Heart left ventricle (tissue), 16 donors: ENCODE measurements at regions of chr22 and their contacts with region 1.

Region 1: GRCh38 chr22:32411829-32412592 is at the start of gene RTCB:
- DNase-seq: peak; percentile 94 to 96 (median 96)
- ATAC-seq: peak; percentile 90 to 94 (median 92)
- H3K4me3 ChIP-seq: peak within 1 kb of the TSS; percentile 68 to 99 (median 85)
- H3K27ac ChIP-seq: peak within 1 kb of the TSS in 11 of 12 donors; percentile 20 to 79 (median 68)
- H3K4me1 ChIP-seq: peaks cover 0 to 48% (median 17%) of the 10 kb centered on the region in 12 donors
- H3K27me3 ChIP-seq: no peaks in the 10 kb centered on the region
- CTCF ChIP-seq: peak in 2 of 12 donors; percentile 2 to 7
- POLR2A ChIP-seq: peak in 1 of 2 donors; percentile 53
- total RNA-seq, gene RTCB: 39.4 to 54.0 (median 47.1) TPM

Region 2: GRCh38 chr22:32354360-32355351 is 57.4 kb before region 1 on chr22:
- intact Hi-C with region 1: no loop called
- DNase-seq: peak in 1 of 5 donors; percentile 54
- ATAC-seq: peak in 1 of 4 donors; percentile 69
- H3K4me3 ChIP-seq: peak overlapping the region in 7 of 12 donors; percentile 21 to 59 (median 48)
- H3K27ac ChIP-seq: peak overlapping the region in 4 of 12 donors; percentile 43 to 75 (median 54)
- H3K4me1 ChIP-seq: no peaks in the 10 kb centered on the region
- H3K27me3 ChIP-seq: no peaks in the 10 kb centered on the region
- CTCF ChIP-seq: peak in 1 of 12 donors; percentile 12
- POLR2A ChIP-seq: peak in 1 of 2 donors; percentile 44

Region 3: DNA sequence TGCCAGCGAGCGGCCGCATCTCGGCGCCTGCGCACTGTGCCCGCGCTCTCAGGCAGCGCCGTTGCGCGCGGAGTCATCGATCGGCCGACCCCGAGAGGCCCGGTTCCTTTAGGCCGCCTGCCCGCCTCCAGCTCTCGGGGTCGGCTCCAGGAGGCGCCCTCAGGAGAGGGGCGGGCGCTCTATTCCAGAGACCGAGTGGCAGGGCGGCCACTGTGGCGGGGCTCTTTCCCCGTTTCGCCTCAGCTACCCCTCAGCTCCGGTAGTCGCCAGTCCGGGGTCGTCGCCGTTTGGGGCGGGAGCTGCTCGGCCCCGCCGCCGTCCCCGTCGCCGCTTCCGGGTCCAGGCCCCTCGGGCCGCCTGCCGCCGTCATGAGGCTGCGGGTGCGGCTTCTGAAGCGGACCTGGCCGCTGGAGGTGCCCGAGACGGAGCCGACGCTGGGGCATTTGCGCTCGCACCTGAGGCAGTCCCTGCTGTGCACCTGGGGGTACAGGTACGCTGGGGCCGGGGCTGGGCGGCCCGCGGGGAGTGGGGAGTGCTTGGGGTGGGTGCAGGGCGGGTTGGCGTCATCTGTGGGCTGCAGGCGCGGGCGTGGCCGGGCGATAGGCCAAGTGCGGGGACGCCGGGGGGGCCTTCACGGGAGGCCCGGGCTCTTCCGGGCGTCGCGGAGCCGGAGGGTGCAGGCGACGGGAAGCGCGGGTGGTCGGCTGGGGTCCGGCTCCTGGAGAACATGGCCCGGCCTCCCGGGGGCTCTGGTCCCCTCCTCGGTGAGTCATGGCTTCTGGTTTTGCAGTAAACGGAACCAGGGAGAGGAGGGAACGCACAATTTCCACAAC is 62.8 kb after region 1 on chr22 and contains the start of gene FBXO7:
- intact Hi-C with region 1: loop called in 8 of 10 experiments (anchors 2 to 10 kb)
- DNase-seq: peak; percentile 93 to 96 (median 95)
- ATAC-seq: peak; percentile 33 to 94 (median 92)
- H3K4me3 ChIP-seq: peak within 1 kb of the TSS; percentile 55 to 100 (median 96)
- H3K27ac ChIP-seq: peak within 1 kb of the TSS; percentile 86 to 100 (median 99)
- H3K4me1 ChIP-seq: peaks cover 8 to 37% (median 29%) of the 10 kb centered on the region in 12 donors
- H3K27me3 ChIP-seq: no peaks in the 10 kb centered on the region
- CTCF ChIP-seq: peak in 7 of 12 donors; percentile 32 to 69 (median 60)
- POLR2A ChIP-seq: peak in 1 of 2 donors; percentile 73
- total RNA-seq, gene FBXO7: 32.8 to 63.0 (median 42.5) TPM

Region 4: GRCh38 chr22:32830473-32830872 is 418.5 kb after region 1 on chr22:
- intact Hi-C with region 1: loop called in 1 of 10 experiments (anchors 5 kb)
- DNase-seq: peak; percentile 62 to 80 (median 72)
- ATAC-seq: peak; percentile 60 to 78 (median 63)
- H3K4me3 ChIP-seq: no peak overlapping the region
- H3K27ac ChIP-seq: peak overlapping the region; percentile 51 to 83 (median 70)
- H3K4me1 ChIP-seq: peaks cover 29 to 100% (median 89%) of the 10 kb centered on the region in 12 donors
- H3K27me3 ChIP-seq: no peaks in the 10 kb centered on the region
- CTCF ChIP-seq: no peak
- POLR2A ChIP-seq: no peak